ENCODE measurements at regions of chr15 and their contacts with region 1.

Region 1: GRCh38 chr15:52440400-52440799 is 88.3 kb downstream of the MYO5A start:
- DNase-seq: peak; percentile 51 to 76 (median 57)
- H3K4me3 ChIP-seq: peak overlapping the region in 1 of 3 experiments; percentile 1
- H3K4me3 Mint-ChIP-seq: no peak overlapping the region
- H3K27ac ChIP-seq: peak overlapping the region; percentile 38 to 83
- H3K27ac Mint-ChIP-seq: peak overlapping the region; percentile 85 to 95 (median 85)
- H3K4me1 ChIP-seq: peaks cover 64 to 75% of the 10 kb centered on the region in 2 donors
- H3K4me1 Mint-ChIP-seq: peaks cover 76% of the 10 kb centered on the region
- H3K27me3 ChIP-seq: no peaks in the 10 kb centered on the region
- H3K27me3 Mint-ChIP-seq: no peaks in the 10 kb centered on the region
- CTCF ChIP-seq: no peak

Region 2: DNA sequence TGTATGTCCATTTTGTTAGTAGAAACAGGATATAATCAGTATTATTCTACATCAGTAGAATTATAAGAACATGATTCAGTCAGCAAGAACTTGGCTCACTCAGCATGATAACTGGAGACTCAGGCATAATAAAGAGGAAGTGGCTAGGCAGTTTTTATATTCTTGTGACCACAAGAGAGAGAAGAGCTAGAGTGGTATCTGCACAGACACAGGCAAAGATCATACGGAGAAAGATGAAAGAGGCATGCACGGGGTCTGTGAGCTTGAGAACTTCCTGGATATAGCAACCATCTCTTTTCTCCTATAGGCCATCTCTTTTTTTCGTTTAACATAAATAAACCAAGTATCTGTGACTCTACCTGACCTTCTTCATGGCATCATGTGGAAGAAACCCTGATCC is 41.5 kb after region 1 on chr15:
- intact Hi-C with region 1: loop called (anchors 2 to 5 kb)
- DNase-seq: peak; percentile 58 to 77 (median 65)
- H3K4me3 ChIP-seq: peak overlapping the region in 1 of 3 experiments; percentile 22
- H3K4me3 Mint-ChIP-seq: no peak overlapping the region
- H3K27ac ChIP-seq: peak overlapping the region in 1 of 2 donors; percentile 29
- H3K27ac Mint-ChIP-seq: peak overlapping the region in 4 of 7 donors; percentile 38 to 85 (median 48)
- H3K4me1 ChIP-seq: peaks cover 40 to 44% of the 10 kb centered on the region in 2 donors
- H3K4me1 Mint-ChIP-seq: peaks cover 58% of the 10 kb centered on the region
- H3K27me3 ChIP-seq: no peaks in the 10 kb centered on the region
- H3K27me3 Mint-ChIP-seq: peaks cover 0 to 2% (median 0%) of the 10 kb centered on the region in 3 donors
- CTCF ChIP-seq: no peak

Region 3: GRCh38 chr15:52568601-52569256 is 128.3 kb after region 1 on chr15 and contains the start of gene ARPP19:
- intact Hi-C with region 1: loop called in 1 of 2 experiments (anchors 10 kb)
- DNase-seq: peak; percentile 64 to 89 (median 71)
- H3K4me3 ChIP-seq: peak within 1 kb of the TSS; percentile 57 to 86 (median 83)
- H3K4me3 Mint-ChIP-seq: peak within 1 kb of the TSS; percentile 90 to 99
- H3K27ac ChIP-seq: peak within 1 kb of the TSS; percentile 93 to 94
- H3K27ac Mint-ChIP-seq: peak within 1 kb of the TSS; percentile 98 to 100 (median 99)
- H3K4me1 ChIP-seq: peaks cover 31 to 45% of the 10 kb centered on the region in 2 donors
- H3K4me1 Mint-ChIP-seq: peaks cover 31% of the 10 kb centered on the region
- H3K27me3 ChIP-seq: no peaks in the 10 kb centered on the region
- H3K27me3 Mint-ChIP-seq: peaks cover 0 to 2% (median 0%) of the 10 kb centered on the region in 3 donors
- CTCF ChIP-seq: peak; percentile 14
- polyA plus RNA-seq, gene ARPP19: 26.2 to 48.3 (median 44.4) TPM